Gastrocnemius medialis (tissue), 4 donors: ENCODE measurements at regions of chr20 and their contacts with region 1.

Region 1: GRCh38 chr20:22999752-23000151 is 35.4 kb upstream of the SSTR4 start:
- DNase-seq: no peak
- ATAC-seq: no peak
- H3K4me3 ChIP-seq: no peak overlapping the region
- H3K27ac ChIP-seq: no peak overlapping the region
- H3K4me1 ChIP-seq: no peaks in the 10 kb centered on the region
- H3K27me3 ChIP-seq: no peaks in the 10 kb centered on the region
- CTCF ChIP-seq: no peak
- POLR2A ChIP-seq: no peak

Region 2: GRCh38 chr20:22949331-22950109 is 50.2 kb before region 1 on chr20:
- in situ Hi-C with region 1: no loop called
- intact Hi-C with region 1: loop called (anchors 10 kb)
- DNase-seq: no peak
- ATAC-seq: no peak
- H3K4me3 ChIP-seq: no peak overlapping the region
- H3K27ac ChIP-seq: no peak overlapping the region
- H3K4me1 ChIP-seq: no peaks in the 10 kb centered on the region
- H3K27me3 ChIP-seq: no peaks in the 10 kb centered on the region
- CTCF ChIP-seq: no peak
- POLR2A ChIP-seq: no peak